ENCODE measurements at regions of chr10 and their contacts with region 1.

Region 1: DNA sequence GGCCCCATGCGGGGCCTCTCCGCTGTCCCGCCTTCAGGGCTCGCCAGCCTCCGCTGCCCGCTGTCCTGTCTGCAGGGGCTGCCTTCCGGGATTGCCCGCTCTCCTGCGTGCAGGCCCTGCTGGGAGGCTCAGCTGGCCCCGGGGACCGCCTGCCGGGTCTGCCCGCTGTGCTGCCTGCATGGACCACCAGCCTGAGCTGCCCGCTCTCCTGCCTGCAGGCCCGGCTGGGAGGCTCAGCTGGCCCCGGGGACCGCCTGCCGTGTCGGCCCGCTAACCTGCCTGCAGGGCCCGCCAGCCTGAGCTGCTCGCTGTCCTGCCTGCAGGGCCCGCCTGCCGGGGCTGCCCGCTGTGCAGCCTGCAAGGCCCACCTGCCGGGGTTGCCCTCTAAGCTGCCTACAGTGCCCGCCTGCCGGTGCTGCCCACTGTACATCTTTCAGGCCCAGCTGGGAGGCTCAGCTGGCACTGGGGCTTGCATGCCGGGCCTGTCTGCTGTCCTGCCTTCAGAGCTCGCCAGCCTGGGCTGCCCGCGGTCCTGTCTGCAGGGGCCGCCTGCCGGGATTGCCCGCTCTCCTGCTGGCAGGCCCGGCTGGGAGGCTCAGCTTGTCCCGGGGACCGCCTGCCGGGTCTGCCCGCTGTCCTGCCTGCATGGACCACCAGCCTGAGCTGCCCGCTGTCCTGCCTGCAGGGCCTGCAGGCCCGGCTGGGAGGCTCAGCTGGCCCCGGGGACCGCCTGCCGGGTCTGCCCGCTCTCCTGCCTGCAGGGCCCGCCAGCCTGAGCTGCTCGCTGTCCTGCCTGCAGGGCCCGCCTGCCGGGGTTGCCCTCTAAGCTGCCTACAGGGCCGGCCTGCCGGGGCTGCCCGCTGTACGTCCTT is 165.1 kb downstream of the GLRX3 start:
- DNase-seq: peak; percentile 58
- ATAC-seq: peak; percentile 74

Region 2: DNA sequence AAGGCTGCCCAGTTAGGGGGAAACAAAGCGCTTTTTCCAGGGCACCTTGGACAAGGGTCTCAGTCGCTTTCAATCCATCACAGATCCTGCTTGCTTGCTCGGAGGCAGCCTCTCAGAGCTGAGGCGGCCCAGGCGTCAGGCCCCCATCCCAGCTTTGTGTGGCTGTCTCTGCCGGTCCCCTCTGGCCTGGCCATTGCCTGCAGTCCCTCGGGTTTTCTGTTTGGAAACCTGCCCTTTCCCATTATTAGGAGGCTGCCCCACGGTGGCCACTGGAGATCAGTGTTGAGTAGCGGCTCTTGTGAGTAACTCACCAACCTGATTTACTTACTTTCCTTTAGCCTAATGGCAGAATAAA is 51.0 kb after region 1 on chr10:
- intact Hi-C with region 1: no loop called
- DNase-seq: no peak
- ATAC-seq: no peak

Region 3: GRCh38 chr10:131514454-131514853 is 1213.2 kb after region 1 on chr10:
- intact Hi-C with region 1: loop called (anchors 10 kb)
- DNase-seq: no peak
- ATAC-seq: peak; percentile 32

Measured in sciatic nerve (tissue), 2 donors.